ENCODE measurements at regions of chr4 and their contacts with region 1.

Region 1: GRCh38 chr4:83083925-83084475 is 30.5 kb downstream of the PLAC8 start:
- DNase-seq: peak; percentile 50
- H3K4me3 Mint-ChIP-seq: peak overlapping the region; percentile 8
- H3K27ac Mint-ChIP-seq: peak overlapping the region; percentile 57
- H3K4me1 Mint-ChIP-seq: peaks cover 53% of the 10 kb centered on the region
- H3K27me3 Mint-ChIP-seq: no peaks in the 10 kb centered on the region

Region 2: GRCh38 chr4:83097018-83097417 is 13.0 kb after region 1 on chr4:
- intact Hi-C with region 1: loop called (anchors 2 kb)
- DNase-seq: no peak
- H3K4me3 Mint-ChIP-seq: no peak overlapping the region
- H3K27ac Mint-ChIP-seq: no peak overlapping the region
- H3K4me1 Mint-ChIP-seq: peaks cover 53% of the 10 kb centered on the region
- H3K27me3 Mint-ChIP-seq: no peaks in the 10 kb centered on the region

Region 3: DNA sequence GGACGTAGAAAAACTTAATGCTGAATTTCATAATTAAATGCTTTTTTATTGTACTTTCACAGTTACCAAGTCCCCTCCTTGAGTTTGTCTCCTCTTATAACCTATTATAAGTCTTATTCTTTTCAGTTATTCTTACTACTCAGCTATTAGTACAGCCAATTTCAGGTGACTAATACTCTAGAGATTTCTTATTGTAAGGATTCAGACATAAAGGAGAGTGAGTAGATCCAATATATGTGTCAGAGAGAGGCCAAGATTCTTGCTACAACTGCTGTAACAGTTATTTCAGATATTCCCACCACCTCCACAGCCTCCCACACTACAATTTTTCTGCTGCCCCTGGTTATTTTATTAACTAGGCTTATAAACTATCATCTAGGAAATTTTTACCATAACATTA is 726.4 kb after region 1 on chr4:
- intact Hi-C with region 1: no loop called
- DNase-seq: no peak
- H3K4me3 Mint-ChIP-seq: no peak overlapping the region
- H3K27ac Mint-ChIP-seq: no peak overlapping the region
- H3K4me1 Mint-ChIP-seq: no peaks in the 10 kb centered on the region
- H3K27me3 Mint-ChIP-seq: no peaks in the 10 kb centered on the region